Kidney (tissue), 22 donors: ENCODE measurements at regions of chr18 and their contacts with region 1.

Region 1: GRCh38 chr18:61635901-61636528 is 256.8 kb downstream of the RNF152 start:
- DNase-seq: peak; percentile 62 to 89 (median 75)
- H3K4me3 ChIP-seq: no peak overlapping the region
- H3K27ac ChIP-seq: peak overlapping the region; percentile 8 to 84
- H3K4me1 ChIP-seq: peaks cover 0 to 36% (median 25%) of the 10 kb centered on the region in 3 donors
- H3K27me3 ChIP-seq: no peaks in the 10 kb centered on the region
- CTCF ChIP-seq: peak; percentile 77

Region 2: GRCh38 chr18:61882296-61883004 is 246.4 kb after region 1 on chr18:
- intact Hi-C with region 1: loop called (anchors 10 kb)
- DNase-seq: no peak
- H3K4me3 ChIP-seq: no peak overlapping the region
- H3K27ac ChIP-seq: no peak overlapping the region
- H3K4me1 ChIP-seq: peaks cover 0 to 7% (median 4%) of the 10 kb centered on the region in 3 donors
- H3K27me3 ChIP-seq: no peaks in the 10 kb centered on the region
- CTCF ChIP-seq: no peak